Left cardiac atrium (tissue), 4 donors: ENCODE measurements at regions of chr1 and their contacts with region 1.

Region 1: DNA sequence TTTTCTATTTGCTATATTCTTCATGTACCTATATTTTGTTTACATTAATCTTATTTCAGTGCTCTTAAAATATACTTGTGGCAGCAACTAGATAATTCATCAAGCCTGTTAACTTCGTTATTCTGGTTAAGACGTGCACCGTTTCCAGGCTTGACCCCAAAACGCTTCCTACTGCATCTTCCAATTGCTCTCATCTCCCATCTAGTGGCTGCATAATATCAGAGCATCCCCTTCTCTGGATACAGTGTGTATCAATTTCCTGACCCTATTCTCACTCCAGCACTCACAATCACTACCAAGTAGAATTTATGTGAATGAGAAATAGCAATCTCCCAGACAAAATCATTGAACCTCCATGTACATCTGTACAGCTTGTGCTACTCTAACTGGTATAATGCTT is 1280.3 kb upstream of the B3GALT2 start:
- DNase-seq: no peak
- ATAC-seq: peak in 1 of 2 donors; percentile 44

Region 2: GRCh38 chr1:193143285-193143684 is 1323.4 kb before region 1 on chr1:
- intact Hi-C with region 1: loop called in 1 of 2 experiments (anchors 10 kb)
- DNase-seq: no peak
- ATAC-seq: no peak